ENCODE measurements at regions of chr5 and their contacts with region 1.

Region 1: DNA sequence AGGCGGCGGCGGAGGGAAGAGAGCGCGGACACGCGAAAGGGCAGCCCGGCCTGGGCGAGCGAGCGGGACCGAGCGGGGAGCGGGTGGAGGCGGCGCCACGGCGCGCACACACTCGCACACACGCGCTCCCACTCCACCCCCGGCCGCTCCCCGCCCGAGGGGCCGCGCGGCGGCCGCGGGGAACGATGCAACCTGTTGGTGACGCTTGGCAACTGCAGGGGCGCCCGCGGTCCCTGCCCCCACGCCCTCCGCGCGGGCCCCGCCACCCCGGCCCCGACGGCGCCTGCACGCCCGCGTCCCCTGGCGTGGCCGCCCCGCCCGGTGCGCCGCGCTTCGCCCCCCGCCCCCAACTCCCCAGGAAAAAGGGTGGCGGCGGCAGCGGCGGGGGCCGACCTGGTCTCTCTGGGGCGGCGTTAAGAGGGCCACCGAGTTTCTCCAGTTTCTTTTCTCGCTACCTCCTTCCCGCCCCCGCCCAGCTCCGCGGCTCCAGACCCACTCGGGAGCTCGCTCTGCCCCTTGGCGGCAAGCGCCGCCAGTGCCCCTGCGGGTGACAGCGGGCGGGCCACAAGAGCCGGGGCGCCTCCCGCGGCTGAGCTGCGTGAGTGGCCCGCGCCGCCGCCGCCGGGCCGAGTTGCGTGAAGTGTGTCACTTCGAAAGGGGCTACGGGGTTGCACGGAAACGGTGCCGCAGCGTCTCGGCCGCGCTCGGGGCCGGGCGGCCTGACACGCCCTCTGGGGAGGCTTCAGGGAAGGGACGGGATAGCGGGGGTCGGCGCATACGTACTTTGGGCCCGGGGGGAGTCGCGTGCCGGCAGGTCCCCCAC is at the start of gene NR3C1:
- DNase-seq: peak; percentile 95
- ATAC-seq: peak; percentile 80
- total RNA-seq, gene NR3C1: 53.0 TPM

Region 2: DNA sequence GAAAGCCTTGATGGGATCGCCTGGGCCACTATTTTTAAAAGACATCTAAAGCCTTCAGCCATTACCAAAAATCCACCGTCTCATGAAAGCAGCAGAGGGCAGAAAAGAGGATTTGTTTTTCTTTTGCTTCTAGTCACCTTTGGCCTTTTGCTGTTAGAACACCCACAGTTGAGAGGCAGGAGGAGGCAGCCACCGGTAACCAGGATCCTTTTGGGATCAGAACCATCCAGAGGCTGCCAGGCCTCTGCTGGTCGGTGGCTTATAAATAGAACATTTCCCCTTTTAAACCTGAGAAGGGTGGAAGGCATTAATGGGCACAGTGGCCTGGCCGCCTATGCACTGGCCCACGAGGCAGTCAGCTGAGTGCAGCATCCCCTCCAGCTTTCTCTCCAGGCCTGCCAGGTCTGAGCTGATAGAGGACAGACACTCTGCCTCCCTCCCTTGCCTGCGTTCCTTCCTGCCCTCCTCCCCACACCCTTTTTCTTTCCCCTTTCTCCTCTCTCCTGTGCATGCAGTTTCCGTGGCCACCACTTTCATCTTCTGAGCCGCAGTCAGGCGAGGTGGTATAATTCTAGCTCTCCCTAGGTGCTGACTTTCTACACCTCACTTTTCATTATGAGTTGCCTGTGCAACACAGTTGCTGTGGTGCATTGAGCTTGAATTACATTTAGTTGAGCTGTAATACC is 380.2 kb before region 1 on chr5:
- intact Hi-C with region 1: loop called (anchors 10 kb)
- DNase-seq: peak; percentile 85
- ATAC-seq: peak; percentile 96